ENCODE measurements at regions of chr3 and their contacts with region 1.

Region 1: GRCh38 chr3:75727985-75728384 is 57.4 kb downstream of the ZNF717 start:
- DNase-seq: no peak
- ATAC-seq: no peak
- H3K4me3 ChIP-seq: no peak overlapping the region
- H3K27ac ChIP-seq: no peak overlapping the region
- H3K4me1 ChIP-seq: no peaks in the 10 kb centered on the region
- H3K27me3 ChIP-seq: no peaks in the 10 kb centered on the region
- CTCF ChIP-seq: no peak
- EP300 ChIP-seq: no peak
- POLR2A ChIP-seq: no peak
- RAD21 ChIP-seq: no peak

Region 2: GRCh38 chr3:75140904-75141615 is 586.9 kb before region 1 on chr3:
- CTCF ChIA-PET with region 1: no interaction called
- POLR2A ChIA-PET with region 1: no interaction called
- in situ Hi-C with region 1: no loop called
- intact Hi-C with region 1: no loop called
- DNase-seq: no peak
- ATAC-seq: no peak
- H3K4me3 ChIP-seq: no peak overlapping the region
- H3K27ac ChIP-seq: no peak overlapping the region
- H3K4me1 ChIP-seq: no peaks in the 10 kb centered on the region
- H3K27me3 ChIP-seq: no peaks in the 10 kb centered on the region
- CTCF ChIP-seq: no peak
- EP300 ChIP-seq: no peak
- POLR2A ChIP-seq: no peak
- RAD21 ChIP-seq: no peak

Region 3: DNA sequence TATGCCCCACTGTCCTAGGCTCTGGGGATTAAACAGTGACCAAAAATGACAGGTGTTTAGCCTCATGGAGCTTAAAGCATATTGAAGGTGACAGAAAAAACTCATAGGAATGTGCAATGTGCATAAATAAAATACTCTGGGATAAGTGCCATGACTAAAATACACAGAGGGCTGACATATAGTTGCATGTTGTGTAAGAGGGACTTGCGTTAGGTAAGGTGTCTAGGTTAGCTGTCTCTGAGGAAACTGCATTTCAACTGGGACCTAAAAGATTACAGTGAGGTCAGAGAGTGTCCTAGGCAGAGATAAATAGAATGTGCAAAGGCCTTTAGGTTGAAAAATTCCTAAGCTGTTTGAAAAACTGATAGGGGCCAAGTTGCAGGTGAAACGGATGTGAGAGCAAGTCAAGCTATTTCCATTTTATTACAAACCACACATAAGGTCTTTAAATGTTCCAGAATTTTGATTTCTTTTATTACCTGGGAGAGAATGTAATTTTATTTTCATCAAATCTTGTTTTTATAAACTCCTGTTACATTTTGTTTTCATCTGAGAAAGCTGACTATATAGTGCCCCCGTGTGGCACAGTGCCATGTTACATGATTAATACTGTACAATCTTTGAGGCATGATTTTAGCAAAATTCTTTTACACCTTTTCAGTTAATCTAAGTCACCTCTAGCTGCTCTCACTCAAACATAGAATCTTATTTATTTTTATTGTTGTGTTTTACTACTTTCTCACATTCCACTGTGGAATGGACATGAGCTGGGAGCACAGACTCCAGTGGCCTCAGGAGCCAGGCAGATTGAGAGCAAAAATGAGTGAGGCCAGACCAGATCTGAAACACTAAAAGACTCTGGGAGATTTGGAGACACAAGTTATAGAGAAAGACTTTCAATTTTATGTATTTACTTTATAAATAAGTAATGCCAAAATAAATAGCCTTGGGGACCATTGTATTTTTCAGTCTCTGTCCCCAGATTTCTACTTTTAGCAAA is 316.9 kb after region 1 on chr3:
- CTCF ChIA-PET with region 1: no interaction called
- POLR2A ChIA-PET with region 1: no interaction called
- in situ Hi-C with region 1: no loop called
- intact Hi-C with region 1: loop called (anchors 5 kb)
- DNase-seq: peak in 3 of 4 experiments; percentile 4 to 19 (median 6)
- ATAC-seq: no peak
- H3K4me3 ChIP-seq: no peak overlapping the region
- H3K27ac ChIP-seq: no peak overlapping the region
- H3K4me1 ChIP-seq: no peaks in the 10 kb centered on the region
- H3K27me3 ChIP-seq: no peaks in the 10 kb centered on the region
- CTCF ChIP-seq: peak in 1 of 3 experiments; percentile 33; a peak in 2 of 6 replicates
- EP300 ChIP-seq: no peak
- POLR2A ChIP-seq: no peak
- RAD21 ChIP-seq: peak in 1 of 2 experiments; percentile 37; a peak in 2 of 4 replicates

Region 4: DNA sequence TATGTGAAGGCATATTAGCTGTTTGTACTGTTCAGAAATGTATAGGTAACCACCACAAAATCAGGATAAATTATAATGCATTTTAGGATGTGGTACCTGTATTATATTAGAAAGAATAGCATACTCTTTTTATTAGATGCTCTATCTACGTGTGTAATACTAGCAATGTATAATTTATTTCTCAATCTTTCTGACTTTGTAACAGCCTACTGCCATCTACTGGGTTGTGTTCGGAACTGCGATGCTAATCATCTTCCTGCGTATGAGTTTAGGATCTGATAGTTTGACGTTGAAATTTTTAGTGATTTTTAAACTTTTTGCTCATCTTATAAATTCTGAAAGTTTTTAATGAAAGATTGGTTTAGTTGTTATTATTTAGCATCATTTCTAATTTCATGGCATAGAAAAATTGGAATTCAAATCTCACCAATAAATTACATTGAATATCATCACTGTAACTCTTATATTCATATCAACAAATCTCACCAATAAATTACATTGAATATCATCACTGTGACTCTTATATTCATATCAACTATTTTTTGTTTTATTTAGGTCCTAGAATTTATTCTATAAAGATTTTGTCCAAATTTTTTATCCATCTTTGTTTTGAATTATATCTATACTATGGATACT is 380.1 kb after region 1 on chr3:
- CTCF ChIA-PET with region 1: no interaction called
- POLR2A ChIA-PET with region 1: no interaction called
- in situ Hi-C with region 1: no loop called
- intact Hi-C with region 1: loop called (anchors 5 kb)
- DNase-seq: peak; percentile 1 to 4 (median 2)
- ATAC-seq: no peak
- H3K4me3 ChIP-seq: no peak overlapping the region
- H3K27ac ChIP-seq: no peak overlapping the region
- H3K4me1 ChIP-seq: no peaks in the 10 kb centered on the region
- H3K27me3 ChIP-seq: no peaks in the 10 kb centered on the region
- CTCF ChIP-seq: peak in 1 of 3 experiments; percentile 34; a peak in 2 of 6 replicates
- EP300 ChIP-seq: no peak
- POLR2A ChIP-seq: no peak
- RAD21 ChIP-seq: no peak